ENCODE measurements at regions of chr7 and their contacts with region 1.

Region 1: DNA sequence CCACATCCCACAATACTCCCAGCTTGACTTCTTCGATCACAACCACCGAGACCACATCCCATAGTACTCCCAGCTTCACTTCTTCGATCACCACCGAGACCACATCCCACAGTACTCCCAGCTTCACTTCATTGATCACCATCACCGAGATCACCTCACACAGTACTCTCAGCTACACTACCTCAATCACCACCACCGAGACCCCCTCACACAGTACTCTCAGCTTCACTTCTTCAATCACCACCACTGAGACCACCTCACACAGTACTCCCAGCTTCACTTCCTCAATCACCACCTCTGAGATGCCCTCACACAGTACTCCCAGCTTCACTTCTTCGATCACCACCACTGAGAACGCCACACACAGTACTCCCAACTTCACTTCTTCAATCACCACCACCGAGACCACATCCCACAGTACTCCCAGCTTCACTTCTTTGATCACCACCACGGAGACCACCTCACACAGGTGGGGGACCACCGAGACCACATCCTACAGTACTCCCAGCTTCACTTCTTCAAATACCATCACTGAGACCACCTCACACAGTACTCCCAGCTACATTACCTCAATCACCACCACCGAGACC is 8.6 kb downstream of the MUC3A start:
- DNase-seq: no peak
- ATAC-seq: no peak
- H3K4me3 ChIP-seq: no peak overlapping the region
- H3K4me3 Mint-ChIP-seq: no peak overlapping the region
- H3K27ac ChIP-seq: no peak overlapping the region
- H3K27ac Mint-ChIP-seq: no peak overlapping the region
- H3K4me1 ChIP-seq: no peaks in the 10 kb centered on the region
- H3K4me1 Mint-ChIP-seq: no peaks in the 10 kb centered on the region
- H3K27me3 ChIP-seq: peaks cover 5 to 15% of the 10 kb centered on the region in 2 experiments
- H3K27me3 Mint-ChIP-seq: peaks cover 5% of the 10 kb centered on the region
- CTCF ChIP-seq: no peak

Region 2: GRCh38 chr7:100586266-100587025 is 371.5 kb before region 1 on chr7 and contains the start of gene FBXO24:
- CTCF ChIA-PET with region 1: no interaction called
- POLR2A ChIA-PET with region 1: no interaction called
- intact Hi-C with region 1: no loop called
- DNase-seq: peak; percentile 98 to 100 (median 99)
- ATAC-seq: peak; percentile 80
- H3K4me3 ChIP-seq: peak within 1 kb of the TSS; percentile 93 to 96
- H3K4me3 Mint-ChIP-seq: peak within 1 kb of the TSS; percentile 96
- H3K27ac ChIP-seq: peak within 1 kb of the TSS; percentile 74 to 94
- H3K27ac Mint-ChIP-seq: peak within 1 kb of the TSS; percentile 57
- H3K4me1 ChIP-seq: peaks cover 22% of the 10 kb centered on the region
- H3K4me1 Mint-ChIP-seq: peaks cover 39% of the 10 kb centered on the region
- H3K27me3 ChIP-seq: no peaks in the 10 kb centered on the region
- H3K27me3 Mint-ChIP-seq: peaks cover 3% of the 10 kb centered on the region
- CTCF ChIP-seq: no peak
- total RNA-seq, gene FBXO24: 0.30 to 0.53 TPM

Region 3: DNA sequence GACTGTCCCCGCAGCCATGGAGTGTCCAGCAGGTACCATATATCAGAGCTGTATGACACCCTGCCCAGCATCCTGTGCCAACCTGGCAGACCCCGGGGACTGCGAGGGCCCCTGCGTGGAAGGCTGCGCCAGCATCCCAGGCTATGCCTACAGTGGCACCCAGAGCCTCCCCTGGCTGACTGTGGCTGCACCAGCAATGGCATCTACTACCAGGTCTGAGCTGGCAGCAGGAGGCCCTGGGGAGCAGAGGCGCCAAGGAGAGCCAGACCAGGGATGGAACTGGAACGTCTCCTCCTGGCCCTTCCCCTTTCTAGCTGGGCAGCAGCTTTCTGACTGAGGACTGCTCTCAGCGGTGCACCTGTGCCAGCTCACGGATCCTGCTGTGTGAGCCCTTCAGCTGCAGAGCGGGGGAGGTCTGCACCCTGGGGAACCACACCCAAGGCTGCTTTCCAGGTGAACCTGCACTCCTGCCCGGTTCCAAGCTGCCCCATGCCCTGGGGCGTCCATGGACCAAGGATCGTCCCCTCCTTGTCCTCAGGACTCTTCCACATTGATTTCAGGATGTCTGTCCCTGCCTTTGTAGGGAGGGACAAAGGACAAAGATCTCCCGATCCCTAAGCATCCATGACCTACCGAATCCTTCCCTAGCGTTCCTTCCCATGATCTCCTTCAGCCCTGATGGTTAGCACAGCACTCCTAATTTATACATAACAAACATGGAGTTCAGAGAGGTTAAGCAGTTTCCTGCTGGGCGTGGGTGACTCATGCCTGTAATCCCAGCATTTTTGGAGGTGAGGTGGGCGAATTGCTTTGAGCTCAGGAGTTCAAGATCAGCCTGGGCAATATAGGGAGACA is 163.9 kb before region 1 on chr7:
- CTCF ChIA-PET with region 1: no interaction called
- POLR2A ChIA-PET with region 1: no interaction called
- intact Hi-C with region 1: no loop called
- DNase-seq: no peak
- ATAC-seq: no peak
- H3K4me3 ChIP-seq: no peak overlapping the region
- H3K4me3 Mint-ChIP-seq: no peak overlapping the region
- H3K27ac ChIP-seq: no peak overlapping the region
- H3K27ac Mint-ChIP-seq: no peak overlapping the region
- H3K4me1 ChIP-seq: no peaks in the 10 kb centered on the region
- H3K4me1 Mint-ChIP-seq: no peaks in the 10 kb centered on the region
- H3K27me3 ChIP-seq: peaks cover 0 to 2% of the 10 kb centered on the region in 2 experiments
- H3K27me3 Mint-ChIP-seq: peaks cover 14% of the 10 kb centered on the region
- CTCF ChIP-seq: no peak

Region 4: DNA sequence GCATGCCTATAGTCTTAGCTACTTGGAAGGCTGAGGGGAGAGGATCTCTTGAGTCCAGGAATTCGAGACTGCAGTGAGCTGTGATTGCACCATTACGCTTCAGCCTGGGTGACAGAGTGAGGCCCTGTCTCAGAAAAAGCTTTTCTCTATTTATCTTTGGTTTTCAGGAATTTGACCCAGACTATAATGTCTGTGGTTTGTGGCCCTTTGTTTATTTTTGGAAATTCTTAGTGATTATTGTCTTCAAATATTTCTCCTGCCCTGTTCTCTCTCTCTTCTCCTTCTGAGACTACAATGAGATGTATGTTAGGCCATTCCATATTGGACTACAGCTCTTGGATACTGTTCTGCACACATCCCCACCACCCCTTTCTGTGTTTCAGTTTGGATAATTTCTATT is 16.1 kb after region 1 on chr7:
- CTCF ChIA-PET with region 1: interaction called, 5 read pairs
- POLR2A ChIA-PET with region 1: no interaction called
- intact Hi-C with region 1: loop called in 1 of 2 experiments (anchors 2 kb)
- DNase-seq: no peak
- ATAC-seq: no peak
- H3K4me3 ChIP-seq: no peak overlapping the region
- H3K4me3 Mint-ChIP-seq: no peak overlapping the region
- H3K27ac ChIP-seq: no peak overlapping the region
- H3K27ac Mint-ChIP-seq: no peak overlapping the region
- H3K4me1 ChIP-seq: no peaks in the 10 kb centered on the region
- H3K4me1 Mint-ChIP-seq: no peaks in the 10 kb centered on the region
- H3K27me3 ChIP-seq: no peaks in the 10 kb centered on the region
- H3K27me3 Mint-ChIP-seq: peaks cover 24% of the 10 kb centered on the region
- CTCF ChIP-seq: no peak